CD8-positive, alpha-beta memory T cell (primary cell): ENCODE measurements at regions of chr9 and their contacts with region 1.

Region 1: DNA sequence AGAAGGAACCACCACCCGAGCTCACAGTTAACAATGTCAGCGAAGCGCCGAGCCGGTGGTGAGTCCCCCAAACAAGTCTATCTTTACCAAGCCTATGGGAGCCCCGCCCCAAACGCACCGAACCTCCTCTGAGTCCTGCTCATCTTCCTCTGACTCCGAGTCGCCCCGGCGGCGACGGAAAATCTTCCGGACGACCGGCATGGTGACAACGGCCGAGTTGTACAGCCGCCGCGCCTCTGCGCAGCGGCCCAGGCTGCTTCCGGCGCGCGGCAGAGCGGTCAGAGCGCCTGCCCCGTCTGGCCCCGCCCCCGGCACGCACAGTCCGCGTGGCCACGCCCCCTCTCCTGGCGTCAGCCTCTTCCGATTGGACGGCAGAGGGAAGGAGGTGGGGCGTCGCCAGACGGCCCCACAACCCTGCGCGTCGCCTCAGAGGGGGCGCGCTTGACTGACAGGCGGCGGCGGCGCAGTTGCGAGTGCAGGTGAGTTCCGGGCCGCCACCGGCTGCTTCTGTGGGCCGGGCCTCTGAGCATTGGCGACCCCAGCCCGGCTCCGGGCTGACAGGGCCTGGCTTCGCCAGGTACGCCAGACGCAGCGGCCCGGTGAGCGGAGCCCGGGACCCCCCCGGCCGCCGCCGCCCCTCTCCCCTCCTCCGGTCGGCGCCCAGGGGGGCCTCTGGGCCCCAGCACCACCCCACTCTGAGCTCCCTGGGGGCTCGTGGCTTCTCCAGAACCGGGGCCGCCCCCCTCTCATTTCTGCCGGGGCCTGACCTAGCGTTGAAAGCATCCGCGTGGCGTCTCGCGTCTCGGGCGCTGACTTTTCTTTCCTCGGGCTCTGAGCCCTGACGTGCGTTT is at the starts of genes C9orf78 and USP20:
- DNase-seq: peak; percentile 95 to 98 (median 98)
- H3K4me3 ChIP-seq: peak within 1 kb of the TSS; percentile 94
- H3K4me3 Mint-ChIP-seq: peak within 1 kb of the TSS; percentile 96 to 100 (median 99)
- H3K27ac ChIP-seq: peak within 1 kb of the TSS; percentile 93
- H3K27ac Mint-ChIP-seq: peak within 1 kb of the TSS; percentile 95 to 100 (median 99)
- H3K4me1 ChIP-seq: peaks cover 54% of the 10 kb centered on the region
- H3K4me1 Mint-ChIP-seq: peaks cover 52 to 65% (median 63%) of the 10 kb centered on the region in 3 donors
- H3K27me3 ChIP-seq: no peaks in the 10 kb centered on the region
- H3K27me3 Mint-ChIP-seq: no peaks in the 10 kb centered on the region
- total RNA-seq, gene C9orf78: 71.4 to 76.4 TPM
- total RNA-seq, gene USP20: 50.2 to 50.8 TPM

Region 2: GRCh38 chr9:129823935-129824601 is 11.2 kb before region 1 on chr9 and contains the start of gene TOR1A:
- CTCF ChIA-PET with region 1: interaction called, 4 read pairs
- POLR2A ChIA-PET with region 1: interaction called, 10 read pairs
- DNase-seq: peak; percentile 88 to 94 (median 89)
- H3K4me3 ChIP-seq: peak within 1 kb of the TSS; percentile 60
- H3K4me3 Mint-ChIP-seq: peak within 1 kb of the TSS; percentile 84 to 96 (median 90)
- H3K27ac ChIP-seq: peak within 1 kb of the TSS; percentile 68
- H3K27ac Mint-ChIP-seq: peak within 1 kb of the TSS; percentile 71 to 97 (median 92)
- H3K4me1 ChIP-seq: peaks cover 9% of the 10 kb centered on the region
- H3K4me1 Mint-ChIP-seq: peaks cover 11 to 15% (median 14%) of the 10 kb centered on the region in 3 donors
- H3K27me3 ChIP-seq: no peaks in the 10 kb centered on the region
- H3K27me3 Mint-ChIP-seq: no peaks in the 10 kb centered on the region
- total RNA-seq, gene TOR1A: 53.8 to 53.9 TPM